GM12878 (cell line): ENCODE measurements at regions of chr2 and their contacts with region 1.

Region 1: GRCh38 chr2:189412330-189412953 is 28.8 kb upstream of the WDR75 start:
- DNase-seq: no peak
- ATAC-seq: peak; percentile 81
- H3K4me3 ChIP-seq: no peak overlapping the region
- H3K27ac ChIP-seq: no peak overlapping the region
- H3K4me1 ChIP-seq: no peaks in the 10 kb centered on the region
- H3K27me3 ChIP-seq: no peaks in the 10 kb centered on the region
- CTCF ChIP-seq: peak; percentile 53 to 77 (median 58)
- EP300 ChIP-seq: no peak
- POLR2A ChIP-seq: no peak
- RAD21 ChIP-seq: peak; percentile 85

Region 2: DNA sequence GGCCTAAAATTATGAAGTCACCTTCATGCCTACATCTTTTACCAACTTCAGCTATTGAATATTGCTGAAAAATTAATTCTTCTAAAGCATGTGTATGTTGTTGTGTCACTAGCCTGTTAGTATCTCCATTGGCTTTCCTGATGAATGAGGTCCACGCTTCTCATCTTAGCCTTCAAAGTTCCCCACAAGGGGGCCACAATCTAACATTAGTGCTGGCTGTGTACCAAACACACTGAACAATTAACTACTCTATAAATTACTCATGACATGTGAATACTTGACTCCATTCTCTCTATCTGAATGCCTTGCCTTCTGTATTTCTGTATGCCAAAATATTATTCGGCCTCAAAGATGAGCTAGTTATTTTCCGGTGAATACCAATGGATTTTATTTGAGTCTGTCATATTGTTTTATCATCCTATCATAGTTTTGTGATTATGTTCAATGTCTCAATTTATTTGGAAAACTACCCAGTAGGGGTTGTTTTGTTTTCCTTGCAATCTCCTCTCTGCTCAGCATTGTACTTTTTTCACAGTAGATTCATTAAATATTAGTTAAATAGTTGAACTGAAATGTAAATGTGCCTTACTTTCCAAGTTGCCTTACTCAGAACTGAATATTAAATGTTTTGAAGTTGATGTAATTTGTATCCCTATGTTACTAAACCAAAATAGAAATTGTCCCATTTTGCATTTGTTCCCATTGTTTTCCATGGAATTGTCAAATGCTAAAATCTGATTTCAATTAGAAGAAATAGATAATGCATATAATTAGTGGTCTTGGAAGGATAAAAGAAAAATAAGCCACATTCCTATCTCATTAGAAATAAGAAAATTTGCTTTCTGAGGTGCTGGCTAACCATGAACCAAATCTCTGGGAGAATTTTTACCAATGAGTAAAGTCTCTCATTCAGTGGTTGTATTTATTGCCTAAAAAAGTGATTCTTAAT is 646.6 kb before region 1 on chr2:
- CTCF ChIA-PET with region 1: no interaction called
- POLR2A ChIA-PET with region 1: no interaction called
- RAD21 ChIA-PET with region 1: no interaction called
- SMC1A ChIA-PET with region 1: no interaction called
- in situ Hi-C with region 1: no loop called
- intact Hi-C with region 1: loop called (anchors 10 kb)
- DNase-seq: no peak
- ATAC-seq: peak; percentile 83
- H3K4me3 ChIP-seq: no peak overlapping the region
- H3K27ac ChIP-seq: no peak overlapping the region
- H3K4me1 ChIP-seq: no peaks in the 10 kb centered on the region
- H3K27me3 ChIP-seq: no peaks in the 10 kb centered on the region
- CTCF ChIP-seq: peak in 2 of 3 experiments; percentile 12 to 35; a peak in 2 of 6 replicates
- EP300 ChIP-seq: no peak
- POLR2A ChIP-seq: no peak
- RAD21 ChIP-seq: peak; percentile 31; the same call in 1 of the 2 replicates

Region 3: GRCh38 chr2:188983427-188984064 is 428.9 kb before region 1 on chr2:
- CTCF ChIA-PET with region 1: interaction called, 14 read pairs
- POLR2A ChIA-PET with region 1: no interaction called
- RAD21 ChIA-PET with region 1: interaction called, 10 read pairs
- SMC1A ChIA-PET with region 1: interaction called, 5 read pairs
- in situ Hi-C with region 1: no loop called
- intact Hi-C with region 1: loop called (anchors 2 kb)
- DNase-seq: no peak
- ATAC-seq: peak; percentile 54
- H3K4me3 ChIP-seq: no peak overlapping the region
- H3K27ac ChIP-seq: no peak overlapping the region
- H3K4me1 ChIP-seq: no peaks in the 10 kb centered on the region
- H3K27me3 ChIP-seq: no peaks in the 10 kb centered on the region
- CTCF ChIP-seq: peak; percentile 13 to 43 (median 16); a peak in 2 of 6 replicates
- EP300 ChIP-seq: no peak
- POLR2A ChIP-seq: no peak
- RAD21 ChIP-seq: peak; percentile 12; the same call in 1 of the 2 replicates

Region 4: GRCh38 chr2:189115126-189115525 is 297.3 kb before region 1 on chr2:
- CTCF ChIA-PET with region 1: interaction called, 10 read pairs
- POLR2A ChIA-PET with region 1: no interaction called
- RAD21 ChIA-PET with region 1: interaction called, 20 read pairs
- SMC1A ChIA-PET with region 1: interaction called, 9 read pairs
- in situ Hi-C with region 1: no loop called
- intact Hi-C with region 1: no loop called
- DNase-seq: no peak
- ATAC-seq: peak; percentile 20; the same call in 2 of the 3 replicates
- H3K4me3 ChIP-seq: no peak overlapping the region
- H3K27ac ChIP-seq: no peak overlapping the region
- H3K4me1 ChIP-seq: no peaks in the 10 kb centered on the region
- H3K27me3 ChIP-seq: no peaks in the 10 kb centered on the region
- CTCF ChIP-seq: no peak; a peak in 1 of 6 replicates
- EP300 ChIP-seq: no peak
- POLR2A ChIP-seq: no peak
- RAD21 ChIP-seq: no peak

Region 5: GRCh38 chr2:189287982-189288521 is 124.4 kb before region 1 on chr2:
- CTCF ChIA-PET with region 1: interaction called, 12 read pairs
- POLR2A ChIA-PET with region 1: no interaction called
- RAD21 ChIA-PET with region 1: interaction called, 11 read pairs
- SMC1A ChIA-PET with region 1: interaction called, 7 read pairs
- in situ Hi-C with region 1: no loop called
- intact Hi-C with region 1: loop called (anchors 5 kb)
- DNase-seq: no peak
- ATAC-seq: peak; percentile 89
- H3K4me3 ChIP-seq: no peak overlapping the region
- H3K27ac ChIP-seq: no peak overlapping the region
- H3K4me1 ChIP-seq: no peaks in the 10 kb centered on the region
- H3K27me3 ChIP-seq: no peaks in the 10 kb centered on the region
- CTCF ChIP-seq: peak; percentile 30 to 54 (median 33); a peak in 4 of 6 replicates
- EP300 ChIP-seq: no peak
- POLR2A ChIP-seq: no peak
- RAD21 ChIP-seq: peak; percentile 64